HepG2 (cell line): ENCODE measurements at regions of chr3 and their contacts with region 1.

Region 1: DNA sequence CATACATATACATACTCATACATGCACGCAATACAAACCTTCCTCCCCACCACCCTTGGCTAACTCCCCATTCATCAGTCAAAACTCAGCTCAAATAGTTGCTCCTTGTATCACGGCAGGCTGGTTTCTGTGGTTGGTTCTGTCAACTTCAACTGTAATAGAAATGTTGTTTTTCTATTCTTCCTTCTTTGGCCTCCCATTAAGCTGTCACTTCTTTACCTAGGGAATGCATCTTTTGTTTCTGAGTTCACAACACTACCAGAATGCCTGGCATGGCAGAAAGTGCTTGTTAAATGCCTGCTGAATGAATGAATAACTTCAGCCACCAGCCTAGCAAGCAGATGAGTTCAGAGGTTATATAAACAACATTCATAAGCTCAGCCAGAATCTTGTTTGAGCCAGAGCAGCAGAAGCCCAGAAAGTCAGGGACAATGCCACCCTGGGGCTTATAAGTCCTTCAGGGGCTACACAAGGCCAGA is 63.1 kb downstream of the B3GALNT1 start:
- DNase-seq: peak; percentile 70
- ATAC-seq: peak; percentile 99
- H3K4me3 ChIP-seq: no peak overlapping the region
- H3K27ac ChIP-seq: no peak overlapping the region
- H3K4me1 ChIP-seq: peaks cover 19% of the 10 kb centered on the region
- H3K27me3 ChIP-seq: no peaks in the 10 kb centered on the region
- CTCF ChIP-seq: no peak
- EP300 ChIP-seq: 0 out of 4 replicates have a peak, but pooled peaks of 1 of the 2 experiments have one; percentile 19
- POLR2A ChIP-seq: no peak
- RAD21 ChIP-seq: no peak

Region 2: GRCh38 chr3:160931474-160931873 is 110.6 kb before region 1 on chr3:
- CTCF ChIA-PET with region 1: no interaction called
- POLR2A ChIA-PET with region 1: no interaction called
- in situ Hi-C with region 1: no loop called
- intact Hi-C with region 1: no loop called
- DNase-seq: no peak
- ATAC-seq: no peak
- H3K4me3 ChIP-seq: no peak overlapping the region
- H3K27ac ChIP-seq: no peak overlapping the region
- H3K4me1 ChIP-seq: peaks cover 10% of the 10 kb centered on the region
- H3K27me3 ChIP-seq: no peaks in the 10 kb centered on the region
- CTCF ChIP-seq: no peak
- EP300 ChIP-seq: no peak
- POLR2A ChIP-seq: no peak
- RAD21 ChIP-seq: no peak

Region 3: GRCh38 chr3:160956806-160957205 is 85.3 kb before region 1 on chr3:
- CTCF ChIA-PET with region 1: no interaction called
- POLR2A ChIA-PET with region 1: no interaction called
- in situ Hi-C with region 1: no loop called
- intact Hi-C with region 1: loop called (anchors 10 kb)
- DNase-seq: peak; percentile 8
- ATAC-seq: peak; percentile 84
- H3K4me3 ChIP-seq: no peak overlapping the region
- H3K27ac ChIP-seq: no peak overlapping the region
- H3K4me1 ChIP-seq: no peaks in the 10 kb centered on the region
- H3K27me3 ChIP-seq: no peaks in the 10 kb centered on the region
- CTCF ChIP-seq: peak; percentile 55
- EP300 ChIP-seq: no peak
- POLR2A ChIP-seq: no peak
- RAD21 ChIP-seq: no peak

Region 4: DNA sequence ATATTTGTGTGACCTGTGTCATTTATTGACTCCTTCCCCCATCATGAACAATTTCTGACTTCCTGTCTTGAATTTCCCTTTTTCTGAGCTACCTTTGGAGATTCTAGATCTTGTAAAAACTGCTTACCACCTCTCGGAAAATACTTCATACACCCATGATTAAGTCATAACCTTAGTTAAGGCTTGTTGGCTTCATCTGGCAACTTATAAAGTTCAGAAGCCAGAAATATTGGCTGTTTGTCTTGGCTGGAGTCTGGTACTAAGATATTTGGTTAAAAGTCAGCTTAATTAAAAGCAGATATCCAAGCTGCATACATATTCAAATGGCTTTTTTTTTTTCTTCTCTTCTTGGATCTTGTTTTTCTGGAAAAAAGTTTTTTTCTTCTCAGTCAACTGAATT is 100.4 kb after region 1 on chr3:
- CTCF ChIA-PET with region 1: no interaction called
- POLR2A ChIA-PET with region 1: no interaction called
- in situ Hi-C with region 1: no loop called
- intact Hi-C with region 1: no loop called
- DNase-seq: no peak
- ATAC-seq: no peak
- H3K4me3 ChIP-seq: no peak overlapping the region
- H3K27ac ChIP-seq: no peak overlapping the region
- H3K4me1 ChIP-seq: peaks cover 6% of the 10 kb centered on the region; the same call in 1 of the 2 replicates
- H3K27me3 ChIP-seq: no peaks in the 10 kb centered on the region
- CTCF ChIP-seq: no peak
- EP300 ChIP-seq: no peak
- POLR2A ChIP-seq: no peak
- RAD21 ChIP-seq: no peak